Activated naive CD4-positive, alpha-beta T cell treated with anti-CD3 and anti-CD28 coated beads, Interleukin-2, amount 10 ng/mL, durations not matched to agents 7 days and 5 days (primary cell): ENCODE measurements at regions of chr21 and their contacts with region 1.

Region 1: GRCh38 chr21:17688912-17689874 is 76.5 kb upstream of the BTG3 start:
- DNase-seq: peak; percentile 54
- H3K4me3 Mint-ChIP-seq: no peak overlapping the region
- H3K27ac Mint-ChIP-seq: peak overlapping the region; percentile 29
- H3K4me1 Mint-ChIP-seq: peaks cover 46% of the 10 kb centered on the region
- H3K27me3 Mint-ChIP-seq: peaks cover 4% of the 10 kb centered on the region

Region 2: GRCh38 chr21:17622018-17622417 is 67.2 kb before region 1 on chr21:
- CTCF ChIA-PET with region 1: no interaction called
- DNase-seq: no peak
- H3K4me3 Mint-ChIP-seq: no peak overlapping the region
- H3K27ac Mint-ChIP-seq: no peak overlapping the region
- H3K4me1 Mint-ChIP-seq: no peaks in the 10 kb centered on the region
- H3K27me3 Mint-ChIP-seq: peaks cover 19% of the 10 kb centered on the region

Region 3: GRCh38 chr21:17699524-17700189 is 10.5 kb after region 1 on chr21:
- CTCF ChIA-PET with region 1: interaction called, 12 read pairs
- DNase-seq: no peak
- H3K4me3 Mint-ChIP-seq: no peak overlapping the region
- H3K27ac Mint-ChIP-seq: no peak overlapping the region
- H3K4me1 Mint-ChIP-seq: peaks cover 30% of the 10 kb centered on the region
- H3K27me3 Mint-ChIP-seq: no peaks in the 10 kb centered on the region

Region 4: DNA sequence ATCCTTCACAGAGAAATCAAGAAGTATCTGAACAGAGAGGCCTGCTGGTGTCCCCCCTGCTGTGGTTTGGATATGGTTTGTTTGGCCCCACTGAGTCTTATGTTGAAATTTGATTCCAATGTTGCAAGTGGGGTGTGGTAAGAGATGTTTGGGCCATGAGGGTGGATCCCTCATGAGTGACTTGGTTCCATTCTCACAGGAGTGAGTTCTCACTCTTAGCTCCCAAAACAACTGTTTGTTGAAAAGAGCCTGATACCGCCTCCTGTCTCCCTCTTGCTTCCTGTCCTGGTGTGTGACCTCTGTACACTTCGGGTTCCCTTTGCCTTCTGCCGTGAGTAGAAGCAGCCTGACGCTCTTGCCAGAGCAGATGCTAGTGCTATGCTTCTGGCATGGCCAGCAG is 69.5 kb after region 1 on chr21:
- CTCF ChIA-PET with region 1: no interaction called
- DNase-seq: no peak
- H3K4me3 Mint-ChIP-seq: no peak overlapping the region
- H3K27ac Mint-ChIP-seq: no peak overlapping the region
- H3K4me1 Mint-ChIP-seq: no peaks in the 10 kb centered on the region
- H3K27me3 Mint-ChIP-seq: no peaks in the 10 kb centered on the region

Region 5: DNA sequence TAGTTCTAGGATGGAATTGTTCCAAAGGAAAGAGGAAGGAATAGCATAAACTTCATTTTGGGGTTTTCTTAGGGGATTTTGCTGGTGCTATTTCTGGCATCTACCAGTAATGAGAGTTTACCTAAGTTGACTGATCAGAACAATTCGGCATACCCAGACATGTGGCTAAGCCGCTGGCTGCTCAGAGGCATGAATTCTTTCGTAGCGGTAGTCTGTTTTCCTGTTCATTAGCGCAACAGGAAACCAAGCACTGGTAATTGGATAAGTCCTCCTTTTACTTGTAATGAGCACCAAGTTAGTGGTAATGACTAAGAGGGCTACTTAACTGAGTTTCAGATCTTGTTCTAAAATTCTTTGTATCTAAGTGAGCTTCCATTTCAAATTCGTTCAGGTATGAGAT is 91.3 kb after region 1 on chr21:
- CTCF ChIA-PET with region 1: interaction called, 11 read pairs
- DNase-seq: peak; percentile 48
- H3K4me3 Mint-ChIP-seq: no peak overlapping the region
- H3K27ac Mint-ChIP-seq: peak overlapping the region; percentile 95
- H3K4me1 Mint-ChIP-seq: peaks cover 89% of the 10 kb centered on the region
- H3K27me3 Mint-ChIP-seq: no peaks in the 10 kb centered on the region

Region 6: DNA sequence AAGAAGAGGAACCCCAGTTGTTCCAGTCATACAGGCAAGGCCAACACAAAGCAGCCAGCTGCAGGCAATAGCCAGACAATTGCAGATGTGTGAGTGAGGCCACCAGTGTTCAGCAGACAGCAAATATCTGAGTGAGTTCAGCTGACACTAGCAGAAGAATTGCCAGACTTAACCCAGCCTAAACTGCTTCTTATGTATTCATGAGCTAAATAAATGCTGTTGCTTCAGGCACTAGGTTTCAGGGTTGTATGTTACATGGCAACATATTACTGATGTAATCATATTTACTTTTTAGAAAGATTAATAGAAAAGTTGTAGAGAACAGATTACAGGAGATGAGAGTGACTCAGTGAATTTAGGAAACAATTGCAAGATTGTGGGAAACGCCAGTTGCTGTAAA is 425.6 kb after region 1 on chr21:
- CTCF ChIA-PET with region 1: no interaction called
- DNase-seq: no peak
- H3K4me3 Mint-ChIP-seq: no peak overlapping the region
- H3K27ac Mint-ChIP-seq: no peak overlapping the region
- H3K4me1 Mint-ChIP-seq: no peaks in the 10 kb centered on the region
- H3K27me3 Mint-ChIP-seq: no peaks in the 10 kb centered on the region